ENCODE measurements at regions of chr15 and their contacts with region 1.

Region 1: GRCh38 chr15:51971375-51972133 is at the start of gene LEO1:
- DNase-seq: peak; percentile 93 to 98
- H3K4me3 ChIP-seq: peak within 1 kb of the TSS; percentile 94
- H3K4me1 ChIP-seq: peaks cover 7% of the 10 kb centered on the region; the same call in 1 of the 2 replicates
- H3K27me3 ChIP-seq: no peaks in the 10 kb centered on the region

Region 2: GRCh38 chr15:51801391-51801835 is 170.1 kb before region 1 on chr15:
- in situ Hi-C with region 1: no loop called
- DNase-seq: peak; percentile 64 to 74
- H3K4me3 ChIP-seq: no peak overlapping the region
- H3K4me1 ChIP-seq: 0 out of 2 replicates have a peak, but pooled peaks cover 3% of the 10 kb centered on the region
- H3K27me3 ChIP-seq: no peaks in the 10 kb centered on the region

Region 3: DNA sequence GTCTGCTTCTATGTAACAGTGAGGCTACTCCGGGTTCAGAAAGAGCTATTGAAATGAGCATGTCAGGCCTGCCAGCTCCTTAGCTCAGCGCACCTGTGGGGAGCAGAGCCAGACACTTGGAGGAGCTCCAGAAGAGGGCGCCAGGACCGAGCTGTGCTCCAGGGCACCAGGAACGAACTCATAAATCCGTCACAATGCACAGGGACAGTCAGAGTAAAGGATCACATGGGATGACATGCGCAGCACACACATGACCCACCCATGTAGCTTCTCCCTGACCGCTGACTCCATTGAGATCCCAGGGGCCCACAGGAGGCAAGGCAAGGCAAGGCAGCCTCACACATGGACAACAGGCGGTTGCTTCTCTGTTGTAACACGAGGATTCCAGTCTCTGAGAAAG is 245.6 kb after region 1 on chr15:
- in situ Hi-C with region 1: loop called (anchors 10 kb)
- DNase-seq: peak; percentile 15 to 64
- H3K4me3 ChIP-seq: no peak overlapping the region
- H3K4me1 ChIP-seq: no peaks in the 10 kb centered on the region
- H3K27me3 ChIP-seq: no peaks in the 10 kb centered on the region

Measured in HAP-1 (cell line).